Left ventricle myocardium superior (tissue), 1 donor: ENCODE measurements at regions of chr11 and their contacts with region 1.

Region 1: GRCh38 chr11:76670485-76671236 is at the start of gene LRRC32:
- DNase-seq: peak; percentile 81
- ATAC-seq: peak; percentile 64
- total RNA-seq, gene LRRC32: 30.8 TPM

Region 2: DNA sequence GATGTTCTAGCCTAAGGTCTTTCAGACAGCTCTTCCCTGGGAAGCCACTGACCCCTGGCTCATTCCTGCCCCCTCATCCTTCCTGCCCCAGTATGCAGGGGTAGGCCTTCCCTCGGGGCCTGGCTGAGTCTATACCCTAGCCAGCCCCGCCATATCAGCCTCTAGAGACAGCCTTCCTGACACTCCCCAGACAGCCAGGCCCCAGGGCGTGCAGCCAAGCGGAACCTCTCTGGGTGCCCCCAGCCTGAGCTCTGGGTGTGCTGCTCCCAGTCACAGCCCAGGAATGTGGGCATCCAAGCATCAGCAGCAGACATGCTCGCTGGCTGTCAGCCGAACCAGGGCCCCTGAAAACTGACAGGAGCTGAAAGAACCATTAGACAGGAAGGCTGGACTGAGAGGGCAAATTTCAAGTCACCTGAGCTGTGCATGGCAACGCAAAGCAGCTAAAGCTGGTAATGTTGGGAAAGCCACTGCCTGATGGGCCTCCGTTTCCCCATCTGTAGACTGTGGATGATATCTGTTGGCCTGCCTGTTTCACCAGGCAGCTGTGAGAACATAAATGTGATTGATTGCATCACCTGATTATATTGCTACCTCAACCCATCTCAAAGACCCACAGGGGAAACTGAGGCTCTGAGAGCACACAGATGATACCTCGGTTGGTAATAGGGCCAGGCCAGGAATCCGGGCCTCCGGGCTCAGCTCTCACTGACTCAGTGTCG is 93.3 kb before region 1 on chr11:
- intact Hi-C with region 1: loop called (anchors 10 kb)
- DNase-seq: peak; percentile 90
- ATAC-seq: peak; percentile 91

Region 3: DNA sequence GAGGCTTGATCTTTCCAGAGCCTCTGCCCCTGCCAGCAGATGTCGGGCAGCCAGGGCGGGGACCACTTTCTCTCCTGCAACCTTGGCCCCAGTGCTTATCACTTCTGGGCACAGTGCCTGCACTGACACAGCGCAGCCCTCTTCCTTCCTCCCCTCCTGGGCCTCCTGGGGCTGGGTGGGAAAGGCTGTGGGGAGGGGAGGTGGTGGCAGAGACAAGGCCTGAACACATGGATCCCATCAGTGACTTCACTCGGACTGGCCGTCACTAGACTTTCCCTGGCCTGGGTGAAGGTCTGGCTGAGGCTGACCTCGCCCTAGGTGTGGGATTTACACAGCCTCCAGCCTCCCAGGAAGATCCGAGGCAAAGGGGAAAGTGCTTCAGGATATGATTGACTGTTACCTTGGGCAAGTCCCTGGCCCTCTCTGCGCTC is 68.2 kb before region 1 on chr11:
- intact Hi-C with region 1: loop called (anchors 10 kb)
- DNase-seq: peak; percentile 79
- ATAC-seq: peak; percentile 70

Region 4: GRCh38 chr11:77236901-77237300 is 566.2 kb after region 1 on chr11:
- intact Hi-C with region 1: no loop called
- DNase-seq: no peak
- ATAC-seq: no peak